ENCODE measurements at regions of chr1 and their contacts with region 1.

Region 1: GRCh38 chr1:39590551-39590950 is 14.0 kb upstream of the PABPC4 start:
- DNase-seq: no peak

Region 2: DNA sequence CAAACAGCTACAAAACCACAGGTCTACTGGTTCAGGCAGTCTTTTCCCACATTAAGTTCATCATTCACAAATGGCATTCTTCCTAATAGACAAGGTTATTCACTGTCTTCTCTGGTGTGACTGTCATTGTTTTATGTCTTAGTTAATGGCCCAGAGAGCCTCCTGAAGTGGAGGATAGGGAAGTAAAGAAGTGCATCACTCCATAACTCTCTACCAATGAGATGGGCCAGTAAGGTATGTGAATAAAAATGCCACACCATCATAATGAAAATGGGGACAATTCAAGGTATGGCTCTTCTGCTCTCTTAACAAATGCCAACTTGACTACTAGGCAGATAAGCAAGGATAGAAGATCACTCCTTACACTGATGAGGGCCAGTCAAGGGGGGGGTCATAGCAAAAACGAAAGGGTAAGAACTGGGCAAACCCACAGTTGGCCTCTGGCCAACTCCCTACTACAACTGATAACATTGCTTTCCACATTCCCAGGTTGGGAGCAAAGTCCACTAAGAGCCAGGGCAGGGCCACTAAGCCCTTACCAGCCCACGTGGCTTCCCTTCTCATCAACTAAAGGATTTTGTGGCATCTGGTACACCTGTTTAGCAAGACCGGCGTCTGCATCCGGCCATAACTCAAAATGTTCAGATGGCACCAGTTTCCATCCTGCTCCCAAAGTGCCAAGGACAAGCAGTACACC is 24.0 kb before region 1 on chr1:
- CTCF ChIA-PET with region 1: no interaction called
- POLR2A ChIA-PET with region 1: no interaction called
- DNase-seq: no peak

Region 3: DNA sequence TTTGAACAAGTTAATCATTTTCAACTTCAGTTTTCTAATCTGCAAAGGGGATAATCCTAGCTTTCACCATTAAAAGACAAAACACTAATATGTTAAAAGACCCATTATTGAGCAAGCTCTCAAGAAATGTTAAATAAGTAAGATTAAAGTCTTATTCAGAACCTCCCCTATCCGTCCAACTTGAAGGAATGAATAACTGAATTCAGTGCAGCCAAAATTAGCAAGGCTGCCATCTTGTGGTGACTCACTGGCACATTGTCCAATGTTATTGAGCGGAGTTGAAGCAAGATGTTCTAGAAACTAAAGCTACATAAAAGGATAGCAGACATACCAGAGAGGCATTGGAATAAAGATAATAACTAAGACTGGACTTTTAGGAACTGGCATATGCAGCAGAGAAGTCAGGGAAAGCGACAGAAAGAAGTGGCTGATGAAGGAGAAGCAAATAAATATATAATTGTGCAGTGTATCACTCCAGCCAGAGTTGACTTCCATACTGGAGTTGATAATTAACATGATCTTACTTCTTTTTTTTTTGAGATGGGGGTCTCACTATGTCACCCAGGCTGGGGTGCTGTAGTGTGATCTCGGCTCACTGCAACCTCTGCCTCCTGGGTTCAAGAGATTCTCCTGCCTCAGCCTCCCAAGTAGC is 441.8 kb after region 1 on chr1:
- CTCF ChIA-PET with region 1: interaction called, 10 read pairs
- POLR2A ChIA-PET with region 1: no interaction called
- DNase-seq: peak; percentile 56